Activated CD8-positive, alpha-beta memory T cell treated with anti-CD3 and anti-CD28 coated beads, Interleukin-2, amount 10 ng/mL, durations not matched to agents 7 days and 5 days (primary cell): ENCODE measurements at regions of chr16 and their contacts with region 1.

Region 1: DNA sequence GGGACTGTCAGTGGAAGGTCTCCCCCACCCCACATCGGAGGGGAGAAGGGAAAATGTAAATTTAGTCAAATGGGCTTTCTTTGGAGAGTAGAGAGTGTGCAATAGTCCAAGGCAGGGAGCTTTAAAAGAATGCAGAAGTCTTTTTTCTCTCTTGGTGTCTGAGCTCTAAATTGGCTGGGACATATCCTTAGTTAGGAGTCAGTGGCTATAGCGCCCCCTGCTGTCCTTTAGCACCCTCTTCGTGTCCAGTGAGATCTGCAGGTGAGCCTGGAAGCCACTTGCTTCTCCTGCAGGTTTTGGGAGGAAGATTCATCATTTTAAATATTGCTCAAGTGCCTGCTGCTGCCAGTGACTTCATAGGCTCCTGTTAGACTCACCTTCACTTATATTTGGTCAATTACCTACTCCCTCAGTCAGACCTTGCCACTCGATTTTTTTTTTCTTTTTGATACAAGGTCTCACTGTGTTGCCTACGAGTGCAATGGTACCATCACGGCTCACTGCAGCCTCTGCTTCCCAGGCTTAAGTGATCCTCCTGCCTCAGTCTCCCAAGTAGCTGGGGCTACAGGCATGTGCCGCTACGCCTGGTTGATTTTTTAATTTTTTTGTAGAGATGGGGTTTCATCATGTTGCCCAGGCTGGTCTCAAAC is 174.8 kb downstream of the PRKCB start:
- DNase-seq: peak; percentile 87
- ATAC-seq: peak; percentile 69
- H3K4me3 Mint-ChIP-seq: no peak overlapping the region
- H3K27ac Mint-ChIP-seq: no peak overlapping the region
- H3K4me1 Mint-ChIP-seq: peaks cover 53% of the 10 kb centered on the region
- H3K27me3 Mint-ChIP-seq: no peaks in the 10 kb centered on the region

Region 2: DNA sequence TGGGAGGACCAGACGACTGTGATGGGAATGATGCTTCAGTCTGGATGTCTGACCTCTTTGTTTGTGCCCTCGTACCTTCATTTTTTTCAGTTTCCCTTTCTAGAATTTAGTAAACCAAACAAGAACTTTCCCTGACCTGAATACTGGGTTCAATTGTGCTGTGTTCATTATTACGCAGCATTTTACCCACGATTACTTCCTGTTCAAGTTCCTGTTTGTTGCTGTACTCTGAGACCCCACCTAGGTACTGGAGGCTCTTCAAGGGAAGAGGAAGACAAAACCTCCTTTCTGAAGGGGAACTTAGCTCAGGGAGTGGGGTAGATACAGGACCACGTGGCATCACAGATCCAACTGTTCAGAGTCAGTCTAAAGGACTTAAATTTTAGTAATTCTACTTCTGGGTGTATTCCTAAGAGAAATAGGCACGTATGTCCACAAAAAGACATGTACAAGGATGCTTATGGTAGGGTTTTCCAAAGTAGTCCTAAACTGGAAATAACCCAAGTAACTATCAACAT is 184.0 kb before region 1 on chr16:
- CTCF ChIA-PET with region 1: interaction called, 11 read pairs
- DNase-seq: peak; percentile 51
- ATAC-seq: peak; percentile 84
- H3K4me3 Mint-ChIP-seq: peak overlapping the region; percentile 4
- H3K27ac Mint-ChIP-seq: peak overlapping the region; percentile 64
- H3K4me1 Mint-ChIP-seq: peaks cover 26% of the 10 kb centered on the region
- H3K27me3 Mint-ChIP-seq: peaks cover 8% of the 10 kb centered on the region

Region 3: DNA sequence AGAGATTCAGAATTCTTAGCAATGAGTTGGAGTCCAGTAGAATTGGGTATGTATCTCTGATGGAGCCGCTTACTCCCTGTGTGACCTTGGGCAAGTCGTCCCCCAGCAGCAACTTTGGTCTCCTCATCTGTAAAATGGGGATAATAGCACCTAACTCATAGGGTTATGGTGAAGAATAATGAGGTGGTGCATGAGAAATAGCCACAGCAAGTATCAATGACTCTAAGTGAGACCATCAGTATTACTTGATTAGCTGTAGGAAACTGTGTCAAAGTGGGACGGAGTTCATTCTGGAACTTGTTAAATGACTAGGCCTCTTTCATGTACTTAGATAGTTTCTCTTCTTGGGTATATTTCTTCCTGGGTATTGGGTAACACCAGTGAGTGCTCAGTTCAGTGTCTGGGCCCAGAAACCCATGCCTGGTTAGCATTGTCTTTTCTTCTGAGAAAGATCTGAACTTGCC is 168.4 kb before region 1 on chr16:
- CTCF ChIA-PET with region 1: interaction called, 24 read pairs
- DNase-seq: peak; percentile 69
- ATAC-seq: peak; percentile 88
- H3K4me3 Mint-ChIP-seq: no peak overlapping the region
- H3K27ac Mint-ChIP-seq: peak overlapping the region; percentile 90
- H3K4me1 Mint-ChIP-seq: peaks cover 81% of the 10 kb centered on the region
- H3K27me3 Mint-ChIP-seq: no peaks in the 10 kb centered on the region

Region 4: GRCh38 chr16:23877107-23878090 is 133.2 kb before region 1 on chr16:
- CTCF ChIA-PET with region 1: interaction called, 34 read pairs
- DNase-seq: no peak
- ATAC-seq: no peak
- H3K4me3 Mint-ChIP-seq: no peak overlapping the region
- H3K27ac Mint-ChIP-seq: peak overlapping the region; percentile 54
- H3K4me1 Mint-ChIP-seq: peaks cover 80% of the 10 kb centered on the region
- H3K27me3 Mint-ChIP-seq: no peaks in the 10 kb centered on the region

Region 5: DNA sequence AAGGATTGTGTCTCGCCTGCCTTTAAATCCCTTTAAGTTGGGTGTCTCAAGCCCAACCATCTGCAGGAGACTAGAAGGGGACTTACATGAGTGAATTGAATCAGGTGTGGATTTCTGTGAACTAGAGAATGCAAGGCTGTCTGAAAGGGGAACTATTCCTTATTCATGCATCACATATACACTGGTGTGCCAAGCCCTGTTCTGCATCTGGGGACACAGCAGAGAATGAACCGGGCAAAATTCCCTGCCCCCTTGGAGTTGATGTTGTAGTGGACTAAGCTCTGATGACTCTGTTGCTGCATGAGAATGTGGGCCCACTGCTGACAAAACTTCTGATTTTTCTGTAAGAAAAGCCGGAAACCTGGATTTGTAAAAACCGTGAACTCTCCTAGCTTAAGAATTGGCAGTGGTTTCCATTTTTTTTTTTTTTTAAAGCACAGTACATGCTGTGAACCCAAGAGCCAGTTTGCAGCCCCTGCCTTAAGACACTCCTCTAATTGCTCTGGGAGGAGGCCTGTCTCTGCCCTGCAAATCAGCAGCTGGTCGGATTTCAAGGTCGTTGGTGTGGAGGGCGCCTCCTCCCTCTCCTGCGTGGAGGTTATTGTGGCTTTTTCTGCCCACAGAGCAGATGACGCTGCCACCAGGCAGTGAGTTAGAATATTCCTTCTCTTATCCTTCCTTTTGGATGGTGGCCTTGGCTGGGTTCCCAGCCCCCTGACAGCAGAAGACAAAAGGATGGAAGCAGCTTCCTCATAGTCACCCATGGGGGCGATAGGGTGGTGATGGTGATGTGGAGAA is 43.8 kb before region 1 on chr16:
- CTCF ChIA-PET with region 1: interaction called, 12 read pairs
- DNase-seq: no peak
- ATAC-seq: peak; percentile 30
- H3K4me3 Mint-ChIP-seq: no peak overlapping the region
- H3K27ac Mint-ChIP-seq: peak overlapping the region; percentile 8
- H3K4me1 Mint-ChIP-seq: peaks cover 23% of the 10 kb centered on the region
- H3K27me3 Mint-ChIP-seq: no peaks in the 10 kb centered on the region

Region 6: GRCh38 chr16:23999663-24000062 is 10.9 kb before region 1 on chr16:
- CTCF ChIA-PET with region 1: interaction called, 17 read pairs
- DNase-seq: peak; percentile 58
- ATAC-seq: peak; percentile 84
- H3K4me3 Mint-ChIP-seq: no peak overlapping the region
- H3K27ac Mint-ChIP-seq: no peak overlapping the region
- H3K4me1 Mint-ChIP-seq: peaks cover 20% of the 10 kb centered on the region
- H3K27me3 Mint-ChIP-seq: no peaks in the 10 kb centered on the region

Region 7: GRCh38 chr16:24036614-24037013 is 26.0 kb after region 1 on chr16:
- CTCF ChIA-PET with region 1: interaction called, 33 read pairs
- DNase-seq: no peak
- ATAC-seq: peak; percentile 32
- H3K4me3 Mint-ChIP-seq: no peak overlapping the region
- H3K27ac Mint-ChIP-seq: peak overlapping the region; percentile 28
- H3K4me1 Mint-ChIP-seq: peaks cover 45% of the 10 kb centered on the region
- H3K27me3 Mint-ChIP-seq: no peaks in the 10 kb centered on the region